ENCODE measurements at regions of chr17 and their contacts with region 1.

Region 1: DNA sequence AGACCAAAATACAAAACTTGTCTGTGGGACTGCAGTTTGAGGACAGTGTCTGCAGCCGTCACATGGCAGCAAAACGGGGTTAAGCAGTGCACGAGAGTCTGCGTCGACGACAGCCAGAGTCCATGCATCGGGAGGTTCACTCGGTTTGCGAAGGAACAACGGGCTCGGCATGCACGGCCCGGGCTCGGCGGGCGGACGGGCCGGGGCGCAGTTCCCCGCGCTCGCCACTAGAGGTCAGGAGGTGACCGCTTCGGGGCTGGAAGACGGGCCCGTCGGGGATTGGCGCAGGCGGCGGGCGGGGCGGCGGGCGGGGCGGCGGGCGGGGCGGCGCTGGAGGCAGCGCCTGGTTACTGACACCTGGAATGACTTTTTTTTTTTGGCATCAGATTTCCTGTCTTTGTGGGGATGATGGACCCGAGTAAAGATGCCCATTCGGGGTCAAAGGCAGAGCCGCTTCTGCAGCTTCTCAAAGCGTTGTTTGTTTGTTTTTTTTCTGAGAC is 6.5 kb downstream of the SCGB1C2 start:
- DNase-seq: peak; percentile 78 to 90
- ATAC-seq: peak; percentile 84 to 93 (median 88)
- H3K4me3 ChIP-seq: peak overlapping the region in 1 of 10 donors; percentile 24
- H3K27ac ChIP-seq: no peak overlapping the region
- H3K4me1 ChIP-seq: peaks cover 0 to 12% (median 4%) of the 10 kb centered on the region in 9 donors
- H3K27me3 ChIP-seq: peaks cover 0 to 3% (median 0%) of the 10 kb centered on the region in 7 donors
- CTCF ChIP-seq: peak; percentile 90 to 97 (median 93)

Region 2: GRCh38 chr17:292531-293382 is 148.9 kb after region 1 on chr17:
- intact Hi-C with region 1: no loop called
- DNase-seq: no peak
- ATAC-seq: no peak
- H3K4me3 ChIP-seq: peak overlapping the region in 1 of 10 donors; percentile 5
- H3K27ac ChIP-seq: no peak overlapping the region
- H3K4me1 ChIP-seq: peaks cover 0 to 1% (median 0%) of the 10 kb centered on the region in 9 donors
- H3K27me3 ChIP-seq: peaks cover 0 to 25% (median 12%) of the 10 kb centered on the region in 7 donors
- CTCF ChIP-seq: no peak

Region 3: GRCh38 chr17:700504-701094 is 556.8 kb after region 1 on chr17:
- intact Hi-C with region 1: loop called in 3 of 10 experiments (anchors 5 kb)
- DNase-seq: no peak
- ATAC-seq: peak in 7 of 8 donors; percentile 37 to 74 (median 54)
- H3K4me3 ChIP-seq: no peak overlapping the region
- H3K27ac ChIP-seq: no peak overlapping the region
- H3K4me1 ChIP-seq: peaks cover 0 to 36% (median 14%) of the 10 kb centered on the region in 9 donors
- H3K27me3 ChIP-seq: no peaks in the 10 kb centered on the region
- CTCF ChIP-seq: peak; percentile 62 to 81 (median 76)

Measured in heart right ventricle (tissue), 16 donors.